ENCODE measurements at regions of chr10 and their contacts with region 1.

Region 1: DNA sequence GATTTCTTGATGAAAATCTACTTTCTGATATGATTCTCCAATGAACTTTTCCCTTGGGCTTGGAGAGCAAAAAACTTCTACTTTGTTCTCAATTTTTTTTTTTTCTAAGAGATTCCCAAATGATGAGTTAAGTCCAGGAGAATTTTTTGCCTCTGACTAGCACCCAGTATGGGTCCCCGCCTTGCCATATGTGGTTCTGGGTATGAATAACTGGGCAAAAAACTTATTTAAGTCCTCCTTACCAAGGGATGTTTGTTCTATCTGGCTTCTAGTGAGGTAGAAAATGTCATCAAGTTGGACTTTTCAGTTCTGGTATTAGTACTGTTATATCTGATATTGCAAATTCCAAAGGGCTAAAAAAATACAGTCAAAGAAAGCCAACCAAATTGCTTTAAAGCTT is 147.8 kb upstream of the LYZL1 start:
- DNase-seq: peak; percentile 82
- H3K4me3 ChIP-seq: no peak overlapping the region
- H3K27ac ChIP-seq: peak overlapping the region; percentile 67
- H3K4me1 ChIP-seq: peaks cover 25% of the 10 kb centered on the region
- H3K27me3 ChIP-seq: no peaks in the 10 kb centered on the region
- CTCF ChIP-seq: no peak

Region 2: GRCh38 chr10:28036587-28036986 is 1104.5 kb before region 1 on chr10:
- CTCF ChIA-PET with region 1: no interaction called
- dilution Hi-C with region 1: no loop called
- in situ Hi-C with region 1: no loop called
- intact Hi-C with region 1: no loop called
- DNase-seq: no peak
- H3K4me3 ChIP-seq: no peak overlapping the region
- H3K27ac ChIP-seq: no peak overlapping the region
- H3K4me1 ChIP-seq: no peaks in the 10 kb centered on the region
- H3K27me3 ChIP-seq: no peaks in the 10 kb centered on the region
- CTCF ChIP-seq: no peak

Region 3: GRCh38 chr10:29160110-29160669 is 19.1 kb after region 1 on chr10:
- CTCF ChIA-PET with region 1: no interaction called
- dilution Hi-C with region 1: no loop called
- in situ Hi-C with region 1: no loop called
- intact Hi-C with region 1: loop called (anchors 1 kb)
- DNase-seq: peak; percentile 96
- H3K4me3 ChIP-seq: no peak overlapping the region
- H3K27ac ChIP-seq: peak overlapping the region; percentile 54
- H3K4me1 ChIP-seq: peaks cover 44% of the 10 kb centered on the region
- H3K27me3 ChIP-seq: no peaks in the 10 kb centered on the region
- CTCF ChIP-seq: no peak